GM12878 (cell line): ENCODE measurements at regions of chr17 and their contacts with region 1.

Region 1: GRCh38 chr17:29219378-29220047 is 27.1 kb upstream of the CRYBA1 start:
- DNase-seq: no peak
- ATAC-seq: peak; percentile 97
- H3K4me3 ChIP-seq: no peak overlapping the region
- H3K27ac ChIP-seq: no peak overlapping the region
- H3K4me1 ChIP-seq: no peaks in the 10 kb centered on the region
- H3K27me3 ChIP-seq: no peaks in the 10 kb centered on the region
- CTCF ChIP-seq: peak; percentile 76 to 95 (median 79)
- EP300 ChIP-seq: no peak
- POLR2A ChIP-seq: no peak
- RAD21 ChIP-seq: peak; percentile 54

Region 2: GRCh38 chr17:28864991-28865849 is 354.3 kb before region 1 on chr17:
- CTCF ChIA-PET with region 1: no interaction called
- POLR2A ChIA-PET with region 1: no interaction called
- RAD21 ChIA-PET with region 1: no interaction called
- SMC1A ChIA-PET with region 1: no interaction called
- in situ Hi-C with region 1: no loop called
- intact Hi-C with region 1: no loop called
- DNase-seq: no peak
- ATAC-seq: peak; percentile 28
- H3K4me3 ChIP-seq: no peak overlapping the region
- H3K27ac ChIP-seq: peak overlapping the region; percentile 31; the same call in 1 of the 2 replicates
- H3K4me1 ChIP-seq: peaks cover 9% of the 10 kb centered on the region
- H3K27me3 ChIP-seq: no peaks in the 10 kb centered on the region
- CTCF ChIP-seq: no peak
- EP300 ChIP-seq: no peak
- POLR2A ChIP-seq: no peak
- RAD21 ChIP-seq: no peak

Region 3: DNA sequence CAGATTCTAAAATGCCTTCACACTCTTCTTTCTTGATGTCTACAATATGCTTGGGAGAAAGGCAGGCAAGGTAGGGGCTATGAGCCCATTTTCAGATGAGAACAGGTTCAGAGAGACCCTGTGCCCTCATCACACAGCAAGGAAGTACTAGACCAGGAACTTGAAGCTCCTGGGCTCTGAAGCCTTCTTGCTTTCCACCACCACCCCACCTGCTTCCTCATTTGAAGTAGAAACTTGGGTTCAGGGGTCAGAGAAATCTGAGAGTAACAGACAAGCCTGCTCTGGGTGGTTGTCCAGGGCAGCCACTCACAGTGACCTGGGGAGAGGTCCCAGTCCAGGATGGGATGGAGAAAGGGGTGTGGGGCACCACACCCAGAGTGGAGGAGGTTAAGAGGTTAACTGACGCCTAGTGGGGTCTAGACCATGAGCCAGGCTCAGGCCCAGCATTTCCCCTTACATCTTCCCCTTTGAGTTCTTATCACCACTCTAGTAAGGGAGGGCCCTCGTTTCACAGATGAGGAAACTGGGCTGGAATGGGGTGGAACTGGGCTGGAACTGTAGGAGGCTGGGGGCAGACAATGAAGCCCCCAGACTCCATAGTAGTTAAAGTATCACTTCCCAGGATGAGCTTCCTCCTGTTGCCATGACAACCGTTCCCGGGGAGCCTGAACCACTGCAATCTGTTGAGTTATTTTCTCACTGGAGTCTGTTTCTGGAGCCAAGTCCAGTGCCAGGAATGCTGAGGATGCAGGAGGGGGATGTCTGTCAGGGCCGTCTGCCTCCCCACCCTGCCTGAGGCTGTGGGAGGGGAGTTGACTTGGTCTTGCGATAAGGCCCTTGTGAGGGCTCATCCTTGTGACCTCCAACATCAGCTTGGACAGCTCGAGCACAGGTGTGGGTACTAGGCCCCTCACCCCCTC is 252.0 kb before region 1 on chr17:
- CTCF ChIA-PET with region 1: interaction called, 18 read pairs
- POLR2A ChIA-PET with region 1: no interaction called
- RAD21 ChIA-PET with region 1: interaction called, 8 read pairs
- SMC1A ChIA-PET with region 1: no interaction called
- in situ Hi-C with region 1: no loop called
- intact Hi-C with region 1: no loop called
- DNase-seq: no peak
- ATAC-seq: peak; percentile 59
- H3K4me3 ChIP-seq: no peak overlapping the region
- H3K27ac ChIP-seq: no peak overlapping the region
- H3K4me1 ChIP-seq: peaks cover 3% of the 10 kb centered on the region; the same call in 1 of the 2 replicates
- H3K27me3 ChIP-seq: peaks cover 0 to 2% of the 10 kb centered on the region in 2 experiments; a peak in 1 of 4 replicates
- CTCF ChIP-seq: no peak
- EP300 ChIP-seq: no peak
- POLR2A ChIP-seq: no peak
- RAD21 ChIP-seq: no peak

Region 4: DNA sequence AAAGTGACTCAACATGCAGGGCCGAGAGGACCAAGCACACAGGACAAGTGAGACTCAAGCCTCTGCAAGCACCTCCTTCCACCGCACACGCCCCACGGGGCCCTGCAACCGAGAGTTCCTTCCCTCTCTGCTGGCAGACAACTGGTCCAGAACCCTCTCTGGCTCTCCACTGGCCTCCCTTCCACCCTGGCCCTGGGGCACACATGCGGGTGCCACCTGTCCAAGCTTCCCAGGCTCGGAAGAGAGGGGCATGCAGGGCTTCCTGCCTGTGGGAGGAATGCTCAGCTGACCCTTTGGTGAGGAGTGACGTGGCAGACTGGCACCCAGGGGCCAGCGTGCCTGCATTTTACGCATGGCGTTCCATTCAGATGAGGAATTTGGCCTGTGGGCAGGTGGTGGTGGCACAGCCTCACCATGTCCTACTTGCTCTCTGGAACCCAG is 116.8 kb before region 1 on chr17:
- CTCF ChIA-PET with region 1: no interaction called
- POLR2A ChIA-PET with region 1: no interaction called
- RAD21 ChIA-PET with region 1: no interaction called
- SMC1A ChIA-PET with region 1: no interaction called
- in situ Hi-C with region 1: no loop called
- intact Hi-C with region 1: no loop called
- DNase-seq: no peak
- ATAC-seq: no peak
- H3K4me3 ChIP-seq: no peak overlapping the region
- H3K27ac ChIP-seq: no peak overlapping the region
- H3K4me1 ChIP-seq: no peaks in the 10 kb centered on the region
- H3K27me3 ChIP-seq: no peaks in the 10 kb centered on the region
- CTCF ChIP-seq: no peak
- EP300 ChIP-seq: no peak
- POLR2A ChIP-seq: no peak
- RAD21 ChIP-seq: no peak

Region 5: GRCh38 chr17:29124117-29124924 is 95.2 kb before region 1 on chr17:
- CTCF ChIA-PET with region 1: interaction called, 51 read pairs
- POLR2A ChIA-PET with region 1: no interaction called
- RAD21 ChIA-PET with region 1: interaction called, 24 read pairs
- SMC1A ChIA-PET with region 1: interaction called, 14 read pairs
- in situ Hi-C with region 1: no loop called
- intact Hi-C with region 1: no loop called
- DNase-seq: no peak
- ATAC-seq: peak; percentile 97
- H3K4me3 ChIP-seq: no peak overlapping the region
- H3K27ac ChIP-seq: no peak overlapping the region
- H3K4me1 ChIP-seq: no peaks in the 10 kb centered on the region
- H3K27me3 ChIP-seq: no peaks in the 10 kb centered on the region
- CTCF ChIP-seq: peak; percentile 71 to 97 (median 72); a peak in 5 of 6 replicates
- EP300 ChIP-seq: no peak
- POLR2A ChIP-seq: no peak
- RAD21 ChIP-seq: peak; percentile 86

Region 6: DNA sequence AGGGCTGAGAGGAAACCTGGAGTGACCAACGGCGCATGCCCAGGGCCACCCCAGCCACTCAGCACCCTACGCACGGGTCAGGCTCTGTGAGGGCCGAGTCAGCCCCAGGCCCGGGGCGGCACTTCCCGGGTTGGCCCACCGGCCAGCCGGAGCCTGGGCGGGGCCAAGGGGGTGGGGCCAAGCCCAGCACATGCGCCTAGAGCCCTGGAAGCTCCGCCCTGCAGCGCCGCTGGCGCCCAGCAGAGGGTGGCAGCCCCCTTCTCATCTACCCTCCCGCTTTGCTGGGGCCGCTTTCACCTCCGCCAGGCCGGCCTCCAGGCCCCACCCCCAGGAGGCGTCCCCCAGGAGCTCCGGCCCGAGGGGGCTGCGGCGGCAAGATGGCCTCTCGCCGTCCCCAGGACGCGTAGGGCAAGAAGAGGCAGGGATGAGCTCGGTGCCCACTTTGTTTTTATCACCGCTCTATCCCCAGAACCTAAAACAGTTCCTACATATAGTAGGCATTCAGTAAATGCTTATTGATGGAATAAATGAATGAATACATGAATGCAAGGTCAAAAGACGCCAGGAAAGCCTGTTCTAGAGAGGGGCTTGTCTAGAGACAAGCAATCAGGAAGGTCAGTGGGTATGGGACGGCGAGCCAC is 70.6 kb before region 1 on chr17:
- CTCF ChIA-PET with region 1: interaction called, 358 read pairs
- POLR2A ChIA-PET with region 1: interaction called, 14 read pairs
- RAD21 ChIA-PET with region 1: interaction called, 182 read pairs
- SMC1A ChIA-PET with region 1: interaction called, 150 read pairs
- in situ Hi-C with region 1: no loop called
- intact Hi-C with region 1: loop called (anchors 1 kb)
- DNase-seq: peak; percentile 79
- ATAC-seq: peak; percentile 90
- H3K4me3 ChIP-seq: peak overlapping the region; percentile 59
- H3K27ac ChIP-seq: peak overlapping the region; percentile 73
- H3K4me1 ChIP-seq: peaks cover 31% of the 10 kb centered on the region
- H3K27me3 ChIP-seq: no peaks in the 10 kb centered on the region
- CTCF ChIP-seq: peak; percentile 91 to 98 (median 97)
- EP300 ChIP-seq: no peak
- POLR2A ChIP-seq: peak; percentile 88
- RAD21 ChIP-seq: peak; percentile 88

Region 7: GRCh38 chr17:29180034-29180787 is 39.3 kb before region 1 on chr17 and contains the start of gene MYO18A:
- CTCF ChIA-PET with region 1: interaction called, 32 read pairs
- POLR2A ChIA-PET with region 1: no interaction called
- RAD21 ChIA-PET with region 1: interaction called, 19 read pairs
- SMC1A ChIA-PET with region 1: interaction called, 8 read pairs
- in situ Hi-C with region 1: no loop called
- intact Hi-C with region 1: no loop called
- DNase-seq: no peak
- ATAC-seq: peak; percentile 93
- H3K4me3 ChIP-seq: peak within 1 kb of the TSS; percentile 72; the same call in 1 of the 2 replicates
- H3K27ac ChIP-seq: no peak within 1 kb of the TSS
- H3K4me1 ChIP-seq: peaks cover 17% of the 10 kb centered on the region
- H3K27me3 ChIP-seq: no peaks in the 10 kb centered on the region
- CTCF ChIP-seq: peak; percentile 87 to 98 (median 89); a peak in 5 of 6 replicates
- EP300 ChIP-seq: no peak
- POLR2A ChIP-seq: peak; percentile 64
- RAD21 ChIP-seq: peak; percentile 58
- polyA plus RNA-seq, gene MYO18A: 2.9 to 3.9 TPM

Region 8: DNA sequence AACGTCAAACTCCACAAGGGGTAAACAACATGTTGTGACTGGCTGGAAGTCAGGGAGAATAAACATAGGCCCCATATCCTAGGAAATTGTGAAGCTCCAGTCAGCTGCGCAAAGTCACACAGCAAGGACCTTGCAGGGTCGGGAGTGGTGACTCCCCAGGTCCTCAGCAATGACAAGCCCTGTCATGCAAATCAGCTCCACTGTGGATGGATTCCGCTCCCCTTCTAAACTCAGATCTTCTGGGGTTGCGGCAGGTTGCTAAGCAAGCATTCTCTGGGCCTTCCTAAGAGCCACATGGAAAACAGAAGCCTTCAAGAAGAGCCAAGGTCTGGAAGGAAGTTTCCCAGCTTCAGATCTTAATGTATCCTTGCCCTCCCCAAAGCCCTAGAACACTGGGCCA is 10.4 kb before region 1 on chr17:
- CTCF ChIA-PET with region 1: interaction called, 29 read pairs
- POLR2A ChIA-PET with region 1: no interaction called
- RAD21 ChIA-PET with region 1: interaction called, 6 read pairs
- SMC1A ChIA-PET with region 1: interaction called, 14 read pairs
- in situ Hi-C with region 1: no loop called
- intact Hi-C with region 1: no loop called
- DNase-seq: no peak
- ATAC-seq: no peak
- H3K4me3 ChIP-seq: no peak overlapping the region
- H3K27ac ChIP-seq: no peak overlapping the region
- H3K4me1 ChIP-seq: no peaks in the 10 kb centered on the region
- H3K27me3 ChIP-seq: no peaks in the 10 kb centered on the region
- CTCF ChIP-seq: no peak
- EP300 ChIP-seq: no peak
- POLR2A ChIP-seq: no peak
- RAD21 ChIP-seq: no peak

Region 9: GRCh38 chr17:29252101-29252866 is 32.8 kb after region 1 on chr17:
- CTCF ChIA-PET with region 1: interaction called, 6 read pairs
- POLR2A ChIA-PET with region 1: interaction called, 3 read pairs
- RAD21 ChIA-PET with region 1: interaction called, 4 read pairs
- SMC1A ChIA-PET with region 1: interaction called, 17 read pairs
- in situ Hi-C with region 1: no loop called
- intact Hi-C with region 1: no loop called
- DNase-seq: no peak
- ATAC-seq: peak; percentile 53
- H3K4me3 ChIP-seq: no peak overlapping the region
- H3K27ac ChIP-seq: no peak overlapping the region
- H3K4me1 ChIP-seq: no peaks in the 10 kb centered on the region
- H3K27me3 ChIP-seq: no peaks in the 10 kb centered on the region
- CTCF ChIP-seq: peak; percentile 19 to 47 (median 46); a peak in 4 of 6 replicates
- EP300 ChIP-seq: no peak
- POLR2A ChIP-seq: no peak
- RAD21 ChIP-seq: peak; percentile 30; the same call in 1 of the 2 replicates